ENCODE measurements at regions of chr3 and their contacts with region 1.

Region 1: GRCh38 chr3:73314151-73314951 is 252.9 kb downstream of the EBLN2 start:
- DNase-seq: no peak
- H3K4me3 ChIP-seq: no peak overlapping the region
- H3K27ac ChIP-seq: no peak overlapping the region
- H3K4me1 ChIP-seq: no peaks in the 10 kb centered on the region
- H3K27me3 ChIP-seq: no peaks in the 10 kb centered on the region
- CTCF ChIP-seq: no peak

Region 2: DNA sequence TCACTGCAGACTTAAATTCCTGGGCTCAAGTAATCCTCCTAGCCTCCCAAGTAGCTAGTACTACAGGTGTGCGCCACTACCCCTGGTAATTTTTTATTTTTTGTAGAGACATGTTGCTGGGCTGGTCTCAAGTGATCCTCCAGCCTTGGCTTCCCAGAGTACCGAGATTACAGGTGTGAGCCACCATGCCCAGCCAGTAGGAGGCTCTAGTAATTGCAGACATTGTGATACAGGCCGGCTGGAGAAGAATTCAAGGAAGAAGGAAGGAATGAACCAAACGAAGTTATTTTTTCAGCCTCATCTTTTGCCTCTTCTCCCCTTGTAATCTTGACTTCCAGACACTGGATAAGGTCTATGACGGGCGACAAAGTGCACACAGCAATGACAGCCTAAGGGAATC is 321.0 kb before region 1 on chr3:
- CTCF ChIA-PET with region 1: no interaction called
- POLR2A ChIA-PET with region 1: no interaction called
- intact Hi-C with region 1: no loop called
- DNase-seq: no peak
- H3K4me3 ChIP-seq: no peak overlapping the region
- H3K27ac ChIP-seq: no peak overlapping the region
- H3K4me1 ChIP-seq: peaks cover 2% of the 10 kb centered on the region
- H3K27me3 ChIP-seq: no peaks in the 10 kb centered on the region
- CTCF ChIP-seq: no peak

Region 3: DNA sequence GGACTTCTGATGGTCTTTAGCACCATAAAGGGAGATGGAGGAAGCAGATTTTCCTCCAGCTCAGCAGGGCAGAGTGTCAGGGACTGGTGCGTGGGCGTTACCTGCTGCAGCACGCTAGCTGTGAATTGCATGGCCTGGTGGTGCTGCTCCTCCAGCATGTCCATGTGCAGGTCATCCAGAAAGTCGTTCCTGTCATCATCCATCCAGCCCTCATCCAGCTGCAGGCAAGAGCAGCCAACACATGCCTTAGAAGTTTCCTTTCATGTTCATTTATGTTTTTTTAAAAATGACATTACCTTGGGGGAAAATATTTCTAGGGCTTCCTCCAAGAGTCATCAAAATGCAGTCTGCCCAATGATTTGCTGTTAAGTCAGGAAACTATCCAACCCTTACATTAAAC is 71.2 kb after region 1 on chr3:
- CTCF ChIA-PET with region 1: no interaction called
- POLR2A ChIA-PET with region 1: interaction called, 12 read pairs
- intact Hi-C with region 1: no loop called
- DNase-seq: no peak
- H3K4me3 ChIP-seq: no peak overlapping the region
- H3K27ac ChIP-seq: no peak overlapping the region
- H3K4me1 ChIP-seq: no peaks in the 10 kb centered on the region
- H3K27me3 ChIP-seq: no peaks in the 10 kb centered on the region
- CTCF ChIP-seq: no peak